ENCODE measurements at regions of chr11 and their contacts with region 1.

Region 1: DNA sequence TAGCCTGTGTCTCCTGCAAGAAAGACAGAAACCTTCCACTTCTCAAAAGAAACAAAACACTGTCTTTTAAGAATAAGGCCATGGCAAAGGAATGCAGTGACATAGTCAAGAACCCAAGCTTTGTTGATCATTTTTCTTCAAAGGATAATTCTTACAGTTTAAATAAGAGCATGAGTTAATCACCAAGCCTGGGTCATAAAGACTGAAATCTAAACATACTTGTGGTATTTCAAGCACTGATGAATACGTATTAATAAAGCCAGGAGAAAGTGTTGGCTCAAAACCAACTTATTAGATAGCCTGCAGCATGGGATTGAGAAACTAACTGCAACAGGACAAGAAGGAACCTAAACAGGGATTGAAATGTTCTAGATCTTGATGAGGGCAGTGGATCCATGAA is 143.3 kb upstream of the MTNR1B start:
- DNase-seq: no peak
- H3K4me3 ChIP-seq: no peak overlapping the region
- H3K27ac ChIP-seq: no peak overlapping the region
- H3K4me1 ChIP-seq: no peaks in the 10 kb centered on the region
- CTCF ChIP-seq: no peak

Region 2: DNA sequence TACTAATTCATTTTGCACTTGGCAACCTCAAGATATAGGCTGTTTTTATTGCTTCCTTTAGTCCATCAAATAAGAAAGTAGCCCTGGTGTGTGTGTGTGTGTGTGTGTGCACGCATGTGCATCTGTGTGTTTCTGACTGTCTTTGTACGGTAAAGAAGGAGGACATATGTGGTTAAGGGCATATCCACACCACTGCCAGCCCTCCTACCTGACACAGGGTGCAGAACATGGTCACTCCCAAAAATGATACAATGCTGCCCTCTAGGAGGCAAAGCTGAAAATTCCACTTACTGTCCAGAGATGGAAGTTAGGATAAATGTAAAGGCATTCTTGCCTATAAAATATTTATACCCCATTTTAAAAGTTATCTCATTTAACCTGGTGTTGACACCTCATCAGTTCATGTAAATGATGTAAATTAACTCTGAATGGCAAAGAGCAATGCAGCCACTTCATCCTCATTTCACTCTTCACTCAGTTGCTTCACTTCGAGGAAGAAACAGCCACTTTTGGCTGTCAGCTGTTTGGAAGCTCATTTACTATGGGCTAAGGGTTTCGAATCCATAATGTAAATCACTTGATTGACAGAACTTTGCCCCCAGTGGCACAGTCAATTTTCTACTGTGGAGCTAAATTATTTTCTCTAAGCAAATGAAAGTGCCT is 60.2 kb after region 1 on chr11:
- CTCF ChIA-PET with region 1: no interaction called
- POLR2A ChIA-PET with region 1: no interaction called
- intact Hi-C with region 1: loop called (anchors 10 kb)
- DNase-seq: peak; percentile 40
- H3K4me3 ChIP-seq: no peak overlapping the region
- H3K27ac ChIP-seq: no peak overlapping the region
- H3K4me1 ChIP-seq: no peaks in the 10 kb centered on the region
- CTCF ChIP-seq: peak; percentile 75